ENCODE measurements at regions of chr16 and their contacts with region 1.

Region 1: DNA sequence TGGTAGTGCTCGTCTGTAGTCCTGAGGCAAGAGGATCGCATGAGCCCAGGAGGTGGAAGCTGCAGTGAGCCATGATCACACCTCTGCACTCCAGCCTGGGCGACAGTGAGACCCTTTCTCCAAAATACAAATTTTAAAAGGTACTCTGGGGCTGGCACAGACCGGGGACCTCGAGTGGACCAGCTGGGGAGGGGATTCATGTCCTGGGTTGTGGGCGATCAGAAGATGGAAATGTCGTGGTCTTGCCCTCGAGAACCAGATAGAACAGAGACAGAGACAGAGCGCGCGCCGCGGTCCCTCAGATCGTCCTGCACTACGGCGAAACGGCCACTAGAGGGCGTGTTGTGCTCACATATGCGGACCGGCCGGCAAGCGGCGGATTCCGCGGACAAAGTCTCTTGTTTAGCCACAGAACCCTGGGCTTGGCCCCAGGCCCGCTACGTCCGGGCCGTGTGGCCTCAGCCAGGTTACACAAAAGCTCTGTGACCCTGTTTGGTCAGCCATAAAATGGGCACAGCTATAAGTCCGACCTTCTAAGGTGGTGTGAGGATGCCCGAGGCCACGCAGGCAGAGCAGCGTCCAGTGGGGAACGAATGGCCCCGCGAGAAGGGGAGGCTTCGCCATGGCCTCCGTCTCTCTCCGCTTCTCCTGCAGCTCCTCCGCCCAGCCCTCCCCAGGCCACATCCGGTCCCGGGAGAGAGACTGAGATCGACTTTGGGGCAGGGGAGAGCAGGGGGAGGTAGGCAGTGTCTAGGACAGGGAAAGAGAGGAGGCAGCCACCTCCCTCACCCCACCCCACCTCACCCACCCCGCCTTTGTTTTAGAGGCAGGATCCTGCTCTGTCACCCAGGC is 14.6 kb upstream of the SBK1 start:
- DNase-seq: peak; percentile 70 to 88 (median 82)
- ATAC-seq: peak; percentile 95
- H3K4me3 ChIP-seq: peak overlapping the region; percentile 82
- H3K4me3 Mint-ChIP-seq: peak overlapping the region; percentile 75 to 86 (median 84)
- H3K27ac ChIP-seq: peak overlapping the region; percentile 73
- H3K27ac Mint-ChIP-seq: peak overlapping the region; percentile 88 to 99 (median 94)
- H3K4me1 ChIP-seq: peaks cover 21 to 30% of the 10 kb centered on the region in 2 donors
- H3K4me1 Mint-ChIP-seq: peaks cover 31 to 61% (median 44%) of the 10 kb centered on the region in 7 donors
- H3K27me3 ChIP-seq: no peaks in the 10 kb centered on the region
- H3K27me3 Mint-ChIP-seq: peaks cover 0 to 30% (median 0%) of the 10 kb centered on the region in 5 donors

Region 2: DNA sequence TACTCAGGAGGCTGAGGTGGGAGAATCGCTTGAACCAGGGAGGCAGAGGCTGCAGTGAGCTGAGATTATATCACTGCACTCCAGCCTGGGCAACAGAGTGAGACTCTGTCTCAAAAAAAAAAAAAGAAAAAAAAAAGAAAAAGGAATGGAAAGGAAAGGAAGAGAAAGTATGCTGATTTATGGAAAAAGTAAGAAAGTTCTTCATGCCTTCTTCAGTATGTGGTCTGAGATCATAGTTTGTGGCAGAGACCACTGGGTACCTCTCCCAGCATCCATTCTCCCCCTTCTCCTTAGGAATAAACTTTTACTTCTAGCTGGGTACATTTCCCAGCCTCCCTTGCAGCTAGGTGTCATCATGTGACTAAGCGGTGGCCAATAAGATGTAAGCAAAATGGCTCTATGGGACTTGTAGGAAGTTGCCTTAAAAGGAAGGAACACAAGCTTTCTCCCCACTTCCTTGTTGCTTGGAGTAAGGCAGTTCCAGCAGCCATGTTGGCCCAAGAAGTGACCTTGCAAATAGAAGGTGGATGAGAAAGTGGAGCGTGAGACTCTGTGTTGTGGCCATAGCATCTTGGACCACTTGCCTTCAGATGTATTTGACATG is 39.9 kb before region 1 on chr16:
- CTCF ChIA-PET with region 1: no interaction called
- POLR2A ChIA-PET with region 1: no interaction called
- intact Hi-C with region 1: no loop called
- DNase-seq: no peak
- ATAC-seq: no peak
- H3K4me3 ChIP-seq: no peak overlapping the region
- H3K4me3 Mint-ChIP-seq: no peak overlapping the region
- H3K27ac ChIP-seq: no peak overlapping the region
- H3K27ac Mint-ChIP-seq: no peak overlapping the region
- H3K4me1 ChIP-seq: no peaks in the 10 kb centered on the region
- H3K4me1 Mint-ChIP-seq: no peaks in the 10 kb centered on the region
- H3K27me3 ChIP-seq: no peaks in the 10 kb centered on the region
- H3K27me3 Mint-ChIP-seq: peaks cover 0 to 2% (median 0%) of the 10 kb centered on the region in 5 donors

Region 3: GRCh38 chr16:28264656-28265055 is 13.1 kb before region 1 on chr16:
- CTCF ChIA-PET with region 1: interaction called, 7 read pairs
- POLR2A ChIA-PET with region 1: interaction called, 7 read pairs
- intact Hi-C with region 1: loop called in 1 of 2 experiments (anchors 1 kb)
- DNase-seq: no peak
- ATAC-seq: no peak
- H3K4me3 ChIP-seq: no peak overlapping the region
- H3K4me3 Mint-ChIP-seq: peak overlapping the region in 5 of 10 donors; percentile 4 to 49 (median 11)
- H3K27ac ChIP-seq: no peak overlapping the region
- H3K27ac Mint-ChIP-seq: peak overlapping the region in 2 of 9 donors; percentile 28 to 33
- H3K4me1 ChIP-seq: peaks cover 0 to 13% of the 10 kb centered on the region in 2 donors
- H3K4me1 Mint-ChIP-seq: peaks cover 3 to 47% (median 23%) of the 10 kb centered on the region in 7 donors
- H3K27me3 ChIP-seq: no peaks in the 10 kb centered on the region
- H3K27me3 Mint-ChIP-seq: peaks cover 0 to 26% (median 8%) of the 10 kb centered on the region in 5 donors

Region 4: GRCh38 chr16:28297784-28298510 is 20.2 kb after region 1 on chr16:
- CTCF ChIA-PET with region 1: interaction called, 9 read pairs
- POLR2A ChIA-PET with region 1: interaction called, 13 read pairs
- intact Hi-C with region 1: loop called in 1 of 2 experiments (anchors 2 kb)
- DNase-seq: no peak
- ATAC-seq: no peak
- H3K4me3 ChIP-seq: peak overlapping the region; percentile 9
- H3K4me3 Mint-ChIP-seq: peak overlapping the region; percentile 44 to 83 (median 72)
- H3K27ac ChIP-seq: peak overlapping the region; percentile 54
- H3K27ac Mint-ChIP-seq: peak overlapping the region; percentile 61 to 96 (median 87)
- H3K4me1 ChIP-seq: peaks cover 61 to 62% of the 10 kb centered on the region in 2 donors
- H3K4me1 Mint-ChIP-seq: peaks cover 41 to 88% (median 74%) of the 10 kb centered on the region in 7 donors
- H3K27me3 ChIP-seq: no peaks in the 10 kb centered on the region
- H3K27me3 Mint-ChIP-seq: peaks cover 0 to 20% (median 0%) of the 10 kb centered on the region in 5 donors

Region 5: GRCh38 chr16:28317040-28317880 is 39.5 kb after region 1 on chr16:
- CTCF ChIA-PET with region 1: interaction called, 124 read pairs
- POLR2A ChIA-PET with region 1: interaction called, 174 read pairs
- intact Hi-C with region 1: loop called (anchors 1 kb)
- DNase-seq: peak; percentile 45 to 82 (median 64)
- ATAC-seq: peak; percentile 84
- H3K4me3 ChIP-seq: no peak overlapping the region
- H3K4me3 Mint-ChIP-seq: peak overlapping the region in 7 of 10 donors; percentile 13 to 63 (median 38)
- H3K27ac ChIP-seq: peak overlapping the region; percentile 38
- H3K27ac Mint-ChIP-seq: peak overlapping the region; percentile 33 to 90 (median 82)
- H3K4me1 ChIP-seq: peaks cover 25 to 30% of the 10 kb centered on the region in 2 donors
- H3K4me1 Mint-ChIP-seq: peaks cover 8 to 49% (median 28%) of the 10 kb centered on the region in 7 donors
- H3K27me3 ChIP-seq: no peaks in the 10 kb centered on the region
- H3K27me3 Mint-ChIP-seq: no peaks in the 10 kb centered on the region

Region 6: DNA sequence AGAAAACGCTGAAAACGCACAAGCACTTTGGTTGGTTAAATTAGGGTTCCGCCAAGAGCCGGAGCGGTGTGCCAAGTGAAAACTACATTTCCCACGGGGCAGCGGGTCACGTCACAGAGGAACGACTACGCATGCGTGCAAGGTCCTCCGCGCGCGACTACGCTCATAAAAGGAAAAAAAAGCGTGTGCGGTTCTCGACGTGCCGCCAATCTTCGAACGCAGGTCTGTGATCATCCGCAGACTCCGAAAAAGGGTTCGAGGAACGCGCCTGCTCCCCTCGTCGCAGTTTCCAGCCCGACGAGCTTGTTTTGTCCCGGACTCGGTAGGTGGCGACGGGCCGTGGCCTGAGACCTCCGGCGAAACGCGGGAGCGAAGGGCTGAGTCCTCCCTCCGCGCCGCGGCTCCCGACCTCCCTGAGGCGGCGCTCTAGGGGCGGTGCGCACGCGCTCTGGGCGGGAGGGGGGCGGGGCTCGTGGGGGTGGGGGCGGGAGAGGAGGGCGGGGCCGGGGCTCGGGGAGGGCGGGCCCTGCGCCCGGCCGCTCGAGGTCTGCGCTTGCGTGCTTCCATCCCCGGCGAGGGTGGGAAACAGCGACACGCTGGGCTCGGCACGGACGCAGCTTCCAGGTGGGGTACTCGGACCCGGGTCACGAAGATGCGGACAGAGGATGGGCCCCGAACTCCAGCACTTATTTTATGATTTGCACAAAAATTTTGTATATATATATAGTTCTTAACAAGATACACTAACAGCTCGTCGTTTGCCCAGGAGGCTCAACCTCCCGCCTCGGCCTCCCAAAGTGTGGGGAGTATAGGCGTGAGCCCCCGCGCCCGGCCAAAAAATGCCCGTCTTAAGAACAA is 276.2 kb after region 1 on chr16 and contains the start of gene SGF29:
- CTCF ChIA-PET with region 1: interaction called, 3 read pairs
- POLR2A ChIA-PET with region 1: interaction called, 5 read pairs
- intact Hi-C with region 1: loop called (anchors 1 to 2 kb)
- DNase-seq: peak; percentile 87 to 97 (median 94)
- ATAC-seq: peak; percentile 96
- H3K4me3 ChIP-seq: peak within 1 kb of the TSS; percentile 97
- H3K4me3 Mint-ChIP-seq: peak within 1 kb of the TSS; percentile 90 to 99 (median 94)
- H3K27ac ChIP-seq: peak within 1 kb of the TSS; percentile 96
- H3K27ac Mint-ChIP-seq: peak within 1 kb of the TSS; percentile 91 to 99 (median 97)
- H3K4me1 ChIP-seq: peaks cover 12 to 22% of the 10 kb centered on the region in 2 donors
- H3K4me1 Mint-ChIP-seq: peaks cover 22 to 54% (median 41%) of the 10 kb centered on the region in 7 donors
- H3K27me3 ChIP-seq: no peaks in the 10 kb centered on the region
- H3K27me3 Mint-ChIP-seq: no peaks in the 10 kb centered on the region
- total RNA-seq, gene SGF29: 41.5 to 80.5 (median 55.0) TPM

Region 7: DNA sequence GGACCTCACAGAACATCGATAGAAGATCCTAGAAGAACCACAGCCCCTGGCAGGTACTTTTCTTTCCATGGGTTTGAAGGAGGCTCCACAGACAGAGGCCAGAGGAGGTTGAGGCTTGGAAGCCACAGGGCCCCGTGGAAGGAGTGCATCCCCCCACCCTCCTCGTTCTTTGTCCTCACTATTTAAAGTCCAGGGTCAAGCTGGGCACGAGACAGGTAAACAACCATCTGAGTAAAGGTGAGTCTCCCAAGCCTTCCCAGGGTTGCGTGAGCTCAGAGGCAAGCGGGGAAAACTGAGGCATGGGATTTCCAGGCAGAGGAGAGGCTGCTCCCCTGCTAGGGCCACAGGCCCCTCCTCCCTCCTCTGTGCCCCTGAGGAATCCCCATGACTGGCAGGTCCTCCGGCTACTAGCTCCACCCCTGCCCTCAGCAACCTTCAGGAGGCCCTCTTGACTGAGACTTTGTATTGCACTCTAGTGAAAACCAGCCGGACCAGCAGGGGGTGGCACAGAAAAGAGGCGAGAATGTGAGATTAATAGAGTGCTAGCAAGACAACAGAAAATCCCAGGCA is 320.0 kb after region 1 on chr16:
- CTCF ChIA-PET with region 1: no interaction called
- POLR2A ChIA-PET with region 1: no interaction called
- intact Hi-C with region 1: no loop called
- DNase-seq: no peak
- ATAC-seq: no peak
- H3K4me3 ChIP-seq: no peak overlapping the region
- H3K4me3 Mint-ChIP-seq: no peak overlapping the region
- H3K27ac ChIP-seq: no peak overlapping the region
- H3K27ac Mint-ChIP-seq: peak overlapping the region in 2 of 9 donors; percentile 28 to 59
- H3K4me1 ChIP-seq: no peaks in the 10 kb centered on the region
- H3K4me1 Mint-ChIP-seq: peaks cover 0 to 12% (median 7%) of the 10 kb centered on the region in 7 donors
- H3K27me3 ChIP-seq: no peaks in the 10 kb centered on the region
- H3K27me3 Mint-ChIP-seq: no peaks in the 10 kb centered on the region

Measured in naive thymus-derived CD4-positive, alpha-beta T cell (primary cell).